Colonic mucosa (tissue), 4 donors: ENCODE measurements at regions of chr4 and their contacts with region 1.

Region 1: DNA sequence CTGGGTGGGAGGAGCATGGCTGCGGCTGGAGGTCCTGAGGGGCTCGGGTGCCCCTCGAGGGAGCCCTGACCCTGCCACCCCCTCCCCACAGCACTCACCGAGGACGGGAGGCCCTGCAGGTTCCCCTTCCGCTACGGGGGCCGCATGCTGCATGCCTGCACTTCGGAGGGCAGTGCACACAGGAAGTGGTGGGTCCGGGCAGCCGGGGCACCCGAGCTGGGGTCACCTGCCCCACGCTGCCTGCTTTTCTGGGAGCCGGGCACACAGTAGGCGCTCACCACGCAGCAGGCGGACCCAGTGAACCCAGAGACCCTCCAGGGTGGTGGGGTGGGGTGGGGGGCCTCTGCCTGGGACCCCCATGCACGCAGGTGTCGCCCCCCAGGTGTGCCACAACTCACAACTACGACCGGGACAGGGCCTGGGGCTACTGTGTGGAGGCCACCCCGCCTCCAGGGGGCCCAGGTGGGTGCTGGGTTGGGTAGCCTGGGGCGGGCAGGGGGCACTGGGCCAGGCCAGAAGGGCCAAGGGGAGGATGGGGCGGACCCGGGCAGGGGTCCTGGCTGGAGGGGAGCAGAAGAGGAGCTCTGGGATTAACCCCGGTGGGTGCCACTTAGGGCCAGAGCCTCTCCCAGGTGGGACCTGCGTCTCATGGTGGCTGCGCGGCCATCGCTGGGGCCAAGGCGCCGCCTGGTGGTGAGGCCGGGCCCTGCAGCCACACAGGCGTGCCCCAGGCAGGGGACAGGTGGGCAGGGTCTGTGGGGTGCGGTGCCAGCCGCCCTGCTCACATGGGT is 1.4 kb downstream of the HGFAC start:
- DNase-seq: peak; percentile 47
- H3K4me3 ChIP-seq: no peak overlapping the region
- H3K27ac ChIP-seq: no peak overlapping the region
- H3K4me1 ChIP-seq: no peaks in the 10 kb centered on the region
- H3K27me3 ChIP-seq: no peaks in the 10 kb centered on the region
- CTCF ChIP-seq: peak; percentile 99

Region 2: DNA sequence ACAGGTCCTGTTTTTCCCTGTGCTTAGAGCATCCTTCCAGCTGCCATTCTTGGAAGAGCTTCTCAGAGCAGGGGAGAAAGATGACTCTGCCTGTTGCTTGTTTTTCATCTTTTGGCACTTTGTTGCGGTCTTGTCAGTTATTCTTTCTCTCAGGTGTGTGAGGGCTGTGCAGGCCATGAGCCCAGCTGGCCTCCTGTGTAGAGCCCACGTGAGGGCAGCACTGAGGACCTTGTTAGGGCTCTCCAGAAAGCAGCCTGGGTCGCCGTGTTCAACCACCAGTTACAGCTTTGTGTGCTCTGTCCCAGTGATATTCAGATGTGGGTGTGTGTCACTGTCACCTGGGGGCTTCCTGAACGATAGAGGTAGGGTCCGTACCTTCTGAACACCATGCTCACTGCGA is 532.7 kb before region 1 on chr4:
- intact Hi-C with region 1: no loop called
- DNase-seq: no peak
- H3K4me3 ChIP-seq: no peak overlapping the region
- H3K27ac ChIP-seq: no peak overlapping the region
- H3K4me1 ChIP-seq: no peaks in the 10 kb centered on the region
- H3K27me3 ChIP-seq: no peaks in the 10 kb centered on the region
- CTCF ChIP-seq: no peak

Region 3: GRCh38 chr4:3193531-3194203 is 249.5 kb before region 1 on chr4:
- intact Hi-C with region 1: loop called (anchors 5 kb)
- DNase-seq: no peak
- H3K4me3 ChIP-seq: no peak overlapping the region
- H3K27ac ChIP-seq: no peak overlapping the region
- H3K4me1 ChIP-seq: no peaks in the 10 kb centered on the region
- H3K27me3 ChIP-seq: no peaks in the 10 kb centered on the region
- CTCF ChIP-seq: no peak

Region 4: GRCh38 chr4:3346146-3346545 is 97.0 kb before region 1 on chr4:
- intact Hi-C with region 1: loop called (anchors 5 kb)
- DNase-seq: peak; percentile 66
- H3K4me3 ChIP-seq: no peak overlapping the region
- H3K27ac ChIP-seq: no peak overlapping the region
- H3K4me1 ChIP-seq: no peaks in the 10 kb centered on the region
- H3K27me3 ChIP-seq: no peaks in the 10 kb centered on the region
- CTCF ChIP-seq: peak; percentile 83

Region 5: GRCh38 chr4:3657902-3658529 is 214.9 kb after region 1 on chr4:
- intact Hi-C with region 1: no loop called
- DNase-seq: no peak
- H3K4me3 ChIP-seq: no peak overlapping the region
- H3K27ac ChIP-seq: no peak overlapping the region
- H3K4me1 ChIP-seq: no peaks in the 10 kb centered on the region
- H3K27me3 ChIP-seq: no peaks in the 10 kb centered on the region
- CTCF ChIP-seq: no peak